ENCODE measurements at regions of chr19 and their contacts with region 1.

Region 1: GRCh38 chr19:15449620-15450527 is at the start of gene WIZ:
- DNase-seq: peak in 1 of 2 experiments; percentile 85
- H3K4me3 ChIP-seq: peak within 1 kb of the TSS; percentile 43 to 93 (median 50)
- H3K27ac ChIP-seq: 0 out of 2 replicates have a peak within 1 kb of the TSS, but pooled peaks have one; percentile 3
- H3K4me1 ChIP-seq: peaks cover 0 to 14% (median 5%) of the 10 kb centered on the region in 4 experiments; a peak in 6 of 7 replicates
- H3K27me3 ChIP-seq: peaks cover 3 to 22% (median 17%) of the 10 kb centered on the region in 4 experiments; a peak in 6 of 7 replicates
- CTCF ChIP-seq: no peak
- EP300 ChIP-seq: no peak
- POLR2A ChIP-seq: no peak
- RAD21 ChIP-seq: no peak
- total RNA-seq, gene WIZ: 33.2 and 34.4 TPM in 2 replicates

Region 2: DNA sequence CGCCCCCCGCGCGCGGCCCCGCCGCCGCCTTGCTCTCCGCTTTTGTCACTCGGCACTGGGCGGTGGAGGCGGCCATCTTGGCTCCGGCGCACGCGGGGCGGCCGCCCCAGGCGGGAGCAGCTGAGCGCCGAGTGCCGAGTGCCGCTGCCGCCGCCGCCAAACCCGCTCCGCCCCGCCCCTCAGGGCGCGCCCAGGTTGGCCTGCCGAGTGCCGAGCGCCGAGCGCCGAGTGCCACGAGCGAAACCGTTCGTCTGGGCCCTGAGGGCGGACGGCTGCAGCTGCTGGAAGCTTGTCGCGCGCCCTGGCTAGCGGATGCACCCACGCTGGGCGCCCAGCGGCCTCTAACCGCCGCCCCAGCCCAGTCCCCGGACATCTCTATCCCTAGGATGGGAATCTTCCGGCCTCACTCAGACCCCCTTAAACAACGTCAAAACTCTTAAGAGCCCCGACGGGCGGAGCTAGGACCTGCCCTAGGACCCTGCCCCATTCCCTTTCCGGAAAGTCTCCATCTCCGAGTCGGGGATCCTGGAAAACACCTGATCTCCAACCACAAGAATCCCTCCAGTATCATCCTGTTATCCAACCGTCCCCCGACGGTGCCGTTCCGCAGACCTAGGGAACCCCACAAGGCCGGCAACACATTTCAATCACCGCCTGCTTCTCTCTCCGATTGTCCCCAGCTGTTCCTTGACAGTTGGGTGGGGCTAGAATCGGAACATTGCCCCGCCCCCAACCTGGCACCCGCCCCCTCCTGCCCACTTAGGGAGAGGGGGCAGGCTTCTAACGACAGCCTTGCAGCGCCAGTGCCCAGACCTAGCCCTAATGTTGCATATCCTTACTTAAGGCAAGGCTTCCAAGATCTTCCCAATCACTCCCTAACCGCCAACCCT is 17.0 kb before region 1 on chr19:
- CTCF ChIA-PET with region 1: interaction called, 8 read pairs
- POLR2A ChIA-PET with region 1: interaction called, 15 read pairs
- DNase-seq: peak in 1 of 2 experiments; percentile 94
- H3K4me3 ChIP-seq: peak overlapping the region; percentile 64 to 80 (median 80)
- H3K27ac ChIP-seq: no peak overlapping the region
- H3K4me1 ChIP-seq: peaks cover 0 to 13% (median 8%) of the 10 kb centered on the region in 4 experiments; a peak in 6 of 7 replicates
- H3K27me3 ChIP-seq: no peaks in the 10 kb centered on the region; a peak in 1 of 7 replicates
- CTCF ChIP-seq: no peak
- EP300 ChIP-seq: peak in 1 of 2 experiments; percentile 90; a peak in 2 of 3 replicates
- POLR2A ChIP-seq: peak in 1 of 2 experiments; percentile 76; a peak in 2 of 3 replicates
- RAD21 ChIP-seq: peak in 1 of 2 experiments; percentile 13; a peak in 1 of 4 replicates

Region 3: GRCh38 chr19:15463861-15464371 is 14.0 kb after region 1 on chr19:
- CTCF ChIA-PET with region 1: interaction called, 25 read pairs
- POLR2A ChIA-PET with region 1: interaction called, 3 read pairs
- DNase-seq: no peak
- H3K4me3 ChIP-seq: peak overlapping the region in 1 of 4 experiments; percentile 33; a peak in 1 of 8 replicates
- H3K27ac ChIP-seq: no peak overlapping the region
- H3K4me1 ChIP-seq: 0 out of 7 replicates have a peak, but pooled peaks cover 0 to 2% (median 0%) of the 10 kb centered on the region in 4 experiments
- H3K27me3 ChIP-seq: peaks cover 5 to 22% (median 12%) of the 10 kb centered on the region in 4 experiments
- CTCF ChIP-seq: peak in 2 of 3 experiments; percentile 1 to 8; a peak in 2 of 4 replicates
- EP300 ChIP-seq: no peak
- POLR2A ChIP-seq: no peak
- RAD21 ChIP-seq: 0 out of 4 replicates have a peak, but pooled peaks of 1 of the 2 experiments have one; percentile 4

Region 4: GRCh38 chr19:15475169-15475568 is 25.3 kb after region 1 on chr19:
- CTCF ChIA-PET with region 1: no interaction called
- POLR2A ChIA-PET with region 1: no interaction called
- DNase-seq: no peak
- H3K4me3 ChIP-seq: no peak overlapping the region
- H3K27ac ChIP-seq: no peak overlapping the region
- H3K4me1 ChIP-seq: no peaks in the 10 kb centered on the region
- H3K27me3 ChIP-seq: peaks cover 0 to 5% (median 2%) of the 10 kb centered on the region in 4 experiments; a peak in 3 of 7 replicates
- CTCF ChIP-seq: no peak
- EP300 ChIP-seq: no peak
- POLR2A ChIP-seq: no peak
- RAD21 ChIP-seq: no peak

Region 5: GRCh38 chr19:15532779-15533521 is 83.1 kb after region 1 on chr19:
- CTCF ChIA-PET with region 1: no interaction called
- POLR2A ChIA-PET with region 1: no interaction called
- DNase-seq: no peak
- H3K4me3 ChIP-seq: no peak overlapping the region
- H3K27ac ChIP-seq: no peak overlapping the region
- H3K4me1 ChIP-seq: no peaks in the 10 kb centered on the region
- H3K27me3 ChIP-seq: no peaks in the 10 kb centered on the region
- CTCF ChIP-seq: no peak
- EP300 ChIP-seq: no peak
- POLR2A ChIP-seq: no peak
- RAD21 ChIP-seq: no peak